Heart right ventricle (tissue), 16 donors: ENCODE measurements at regions of chr4 and their contacts with region 1.

Region 1: DNA sequence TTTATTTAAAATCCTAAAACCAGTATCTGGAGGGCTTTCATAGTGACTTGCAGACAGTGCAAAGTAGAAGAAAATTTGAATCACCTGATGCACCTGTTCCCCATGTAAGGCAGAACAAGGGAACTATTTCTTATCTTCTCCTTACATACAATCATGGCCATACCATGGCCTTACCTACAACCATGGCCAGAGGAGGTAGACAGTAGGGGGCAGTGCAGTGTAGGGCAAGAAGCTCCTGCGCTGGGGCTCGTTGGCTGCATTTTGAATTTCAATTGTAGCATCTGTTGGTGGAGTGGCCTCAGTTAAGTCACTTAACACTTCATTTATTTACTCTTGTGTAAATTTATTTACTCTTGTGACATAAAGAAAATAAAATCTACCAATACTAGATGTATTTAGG is 33.0 kb downstream of the GALNTL6 start:
- DNase-seq: peak; percentile 9 to 15
- ATAC-seq: peak in 2 of 8 donors; percentile 51
- H3K4me3 ChIP-seq: no peak overlapping the region
- H3K27ac ChIP-seq: no peak overlapping the region
- H3K4me1 ChIP-seq: no peaks in the 10 kb centered on the region
- H3K27me3 ChIP-seq: no peaks in the 10 kb centered on the region
- CTCF ChIP-seq: peak in 8 of 9 donors; percentile 28 to 54 (median 42)

Region 2: DNA sequence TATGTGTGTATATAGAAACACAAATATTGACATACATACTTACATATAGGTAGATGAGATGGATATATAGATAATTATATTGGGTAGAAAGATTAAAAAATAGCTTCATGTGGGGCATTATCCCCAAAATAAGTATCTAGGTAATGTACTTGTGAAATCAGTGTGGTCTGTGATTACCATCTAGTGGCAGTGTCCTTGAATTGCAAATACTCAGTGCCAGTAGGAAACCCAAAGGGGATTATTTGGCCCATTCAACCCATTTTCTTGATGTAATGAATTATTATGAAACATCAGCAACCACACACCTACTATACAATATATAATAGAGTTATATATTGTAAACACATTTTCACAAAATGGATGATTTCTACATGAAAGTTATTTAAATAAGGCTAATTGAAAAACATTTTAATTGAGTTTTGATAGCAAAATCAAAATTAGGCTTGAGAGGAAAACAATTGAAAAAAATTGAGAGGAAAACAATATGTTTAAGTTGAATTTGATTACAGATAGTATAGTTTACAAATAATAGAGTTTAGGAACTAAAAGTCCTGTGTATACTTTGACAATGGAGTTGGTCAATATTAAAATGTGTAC is 356.3 kb after region 1 on chr4:
- intact Hi-C with region 1: loop called in 3 of 10 experiments (anchors 5 to 10 kb)
- DNase-seq: no peak
- ATAC-seq: no peak
- H3K4me3 ChIP-seq: no peak overlapping the region
- H3K27ac ChIP-seq: no peak overlapping the region
- H3K4me1 ChIP-seq: no peaks in the 10 kb centered on the region
- H3K27me3 ChIP-seq: no peaks in the 10 kb centered on the region
- CTCF ChIP-seq: peak in 7 of 9 donors; percentile 34 to 60 (median 45)